ENCODE measurements at regions of chr7 and their contacts with region 1.

Region 1: DNA sequence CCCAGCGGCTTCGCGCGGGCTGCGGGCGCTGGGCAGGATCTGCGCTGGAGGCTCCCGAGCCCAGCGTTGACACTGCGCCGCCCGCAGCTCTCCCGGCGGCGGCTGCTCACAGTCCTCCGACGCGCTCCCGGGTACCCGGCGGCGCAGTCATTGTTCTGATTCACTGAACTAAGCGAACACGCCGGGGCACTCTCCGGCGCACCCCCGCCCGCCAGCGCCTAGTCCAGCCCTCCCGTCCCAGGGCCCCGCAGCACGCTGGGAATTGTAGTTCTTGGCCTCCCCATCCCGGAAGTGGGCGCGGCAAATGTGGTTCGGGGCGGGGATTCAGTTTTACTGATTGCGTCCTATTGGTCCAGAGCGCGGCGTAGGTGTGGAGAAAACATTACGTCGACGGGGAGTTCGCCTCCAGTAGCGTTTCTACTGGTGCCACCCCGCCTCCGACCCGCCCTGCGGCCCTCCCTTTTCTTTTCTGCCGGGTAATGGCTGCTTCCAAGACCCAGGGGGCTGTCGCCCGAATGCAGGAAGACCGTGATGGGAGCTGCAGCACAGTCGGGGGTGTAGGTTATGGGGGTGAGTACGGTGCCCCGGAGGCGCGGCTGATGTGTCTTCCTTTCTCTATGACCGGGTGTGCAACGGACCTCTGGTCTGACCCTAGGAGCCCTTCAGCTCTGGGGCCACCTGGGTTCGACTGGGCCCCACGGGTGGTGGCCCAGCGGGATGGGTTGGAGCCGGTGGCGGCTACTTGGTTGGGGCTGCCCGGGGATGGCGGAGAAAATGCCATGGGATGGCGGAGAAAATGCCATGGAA is at the starts of genes DOCK4 and ZNF277:
- DNase-seq: peak; percentile 98
- ATAC-seq: peak; percentile 92 to 95
- H3K4me3 ChIP-seq: peak within 1 kb of the TSS; percentile 84 to 96 (median 88)
- H3K27ac ChIP-seq: peak within 1 kb of the TSS; percentile 84 to 91 (median 87)
- H3K4me1 ChIP-seq: peaks cover 26 to 40% of the 10 kb centered on the region in 2 donors
- H3K27me3 ChIP-seq: no peaks in the 10 kb centered on the region
- CTCF ChIP-seq: no peak
- POLR2A ChIP-seq: peak; percentile 82 to 94
- total RNA-seq, gene DOCK4: 8.7 to 12.0 (median 10.2) TPM
- total RNA-seq, gene ZNF277: 12.2 to 16.5 (median 15.0) TPM

Region 2: GRCh38 chr7:111561885-111562732 is 644.3 kb before region 1 on chr7 and contains the start of gene IMMP2L:
- in situ Hi-C with region 1: loop called in 1 of 4 experiments (anchors 25 kb)
- intact Hi-C with region 1: no loop called
- DNase-seq: peak; percentile 73 to 81
- ATAC-seq: peak; percentile 92 to 95
- H3K4me3 ChIP-seq: peak within 1 kb of the TSS; percentile 76 to 84 (median 78)
- H3K27ac ChIP-seq: peak within 1 kb of the TSS; percentile 84 to 92 (median 91)
- H3K4me1 ChIP-seq: peaks cover 14 to 29% of the 10 kb centered on the region in 2 donors
- H3K27me3 ChIP-seq: no peaks in the 10 kb centered on the region
- CTCF ChIP-seq: peak in 3 of 5 experiments; percentile 16 to 58 (median 35)
- POLR2A ChIP-seq: peak; percentile 93 to 97
- total RNA-seq, gene IMMP2L: 8.3 to 19.2 (median 17.8) TPM

Region 3: GRCh38 chr7:112390167-112390566 is 183.7 kb after region 1 on chr7:
- in situ Hi-C with region 1: no loop called
- intact Hi-C with region 1: loop called (anchors 5 kb)
- DNase-seq: no peak
- ATAC-seq: no peak
- H3K4me3 ChIP-seq: no peak overlapping the region
- H3K27ac ChIP-seq: peak overlapping the region in 2 of 4 donors; percentile 87 to 95
- H3K4me1 ChIP-seq: peaks cover 6 to 10% of the 10 kb centered on the region in 2 donors
- H3K27me3 ChIP-seq: no peaks in the 10 kb centered on the region
- CTCF ChIP-seq: no peak
- POLR2A ChIP-seq: no peak

Region 4: GRCh38 chr7:112481833-112482670 is 275.6 kb after region 1 on chr7:
- in situ Hi-C with region 1: loop called in 1 of 4 experiments (anchors 25 kb)
- intact Hi-C with region 1: loop called (anchors 5 kb)
- DNase-seq: peak; percentile 86 to 95
- ATAC-seq: peak; percentile 87 to 90
- H3K4me3 ChIP-seq: peak overlapping the region; percentile 16 to 32 (median 30)
- H3K27ac ChIP-seq: peak overlapping the region; percentile 87 to 96 (median 92)
- H3K4me1 ChIP-seq: peaks cover 43 to 53% of the 10 kb centered on the region in 2 donors
- H3K27me3 ChIP-seq: no peaks in the 10 kb centered on the region
- CTCF ChIP-seq: peak in 1 of 5 experiments; percentile 12
- POLR2A ChIP-seq: peak; percentile 80 to 91

Region 5: GRCh38 chr7:112789817-112790585 is 583.6 kb after region 1 on chr7 and contains the start of gene TMEM168:
- in situ Hi-C with region 1: no loop called
- intact Hi-C with region 1: loop called (anchors 1 kb)
- DNase-seq: peak; percentile 43 to 64
- ATAC-seq: peak; percentile 81 to 88
- H3K4me3 ChIP-seq: peak within 1 kb of the TSS; percentile 82 to 98 (median 94)
- H3K27ac ChIP-seq: peak within 1 kb of the TSS; percentile 83 to 90 (median 88)
- H3K4me1 ChIP-seq: peaks cover 8 to 20% of the 10 kb centered on the region in 2 donors
- H3K27me3 ChIP-seq: no peaks in the 10 kb centered on the region
- CTCF ChIP-seq: no peak
- POLR2A ChIP-seq: peak; percentile 28 to 32
- total RNA-seq, gene TMEM168: 6.0 to 10.9 (median 6.2) TPM

Measured in gastrocnemius medialis (tissue), 4 donors.